ENCODE measurements at regions of chr3 and their contacts with region 1.

Region 1: DNA sequence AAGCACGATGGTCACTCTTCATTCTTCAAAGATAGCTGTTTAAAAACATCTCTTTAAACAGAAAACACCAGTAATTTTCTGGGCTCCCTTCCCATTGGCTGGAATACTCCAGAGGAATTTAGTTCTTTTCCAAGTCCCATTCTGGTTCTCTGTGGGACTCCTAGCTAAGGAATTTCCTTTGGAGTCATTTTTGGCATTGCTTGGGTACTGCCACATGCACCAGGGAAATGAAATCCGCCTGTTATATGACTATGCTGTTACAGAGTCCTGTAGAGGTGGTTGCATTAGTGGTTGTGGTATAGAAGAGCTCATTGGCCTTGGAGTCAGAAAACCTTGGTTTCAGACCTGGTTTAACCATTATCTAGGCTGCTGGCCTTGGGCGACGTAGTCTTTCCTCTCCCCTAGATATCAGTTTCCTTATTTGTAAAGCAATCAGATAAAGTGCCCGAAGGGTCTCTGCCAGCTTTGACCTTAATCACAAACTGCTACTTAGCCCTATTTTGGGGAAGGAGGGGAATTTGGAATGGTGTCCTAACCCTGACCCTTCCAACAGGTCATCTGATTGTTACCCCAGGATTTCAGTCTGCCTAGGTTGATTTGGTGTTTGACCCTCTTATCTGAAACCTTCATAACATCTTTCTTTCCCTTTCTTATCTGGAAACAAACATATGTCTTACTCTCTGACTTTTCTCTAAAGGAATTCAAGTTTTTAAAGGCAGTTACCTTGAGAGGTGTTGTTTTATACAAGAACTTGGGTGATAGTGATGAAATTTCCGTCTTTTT is 13.4 kb downstream of the RTP1 start:
- DNase-seq: no peak
- CTCF ChIP-seq: no peak

Region 2: DNA sequence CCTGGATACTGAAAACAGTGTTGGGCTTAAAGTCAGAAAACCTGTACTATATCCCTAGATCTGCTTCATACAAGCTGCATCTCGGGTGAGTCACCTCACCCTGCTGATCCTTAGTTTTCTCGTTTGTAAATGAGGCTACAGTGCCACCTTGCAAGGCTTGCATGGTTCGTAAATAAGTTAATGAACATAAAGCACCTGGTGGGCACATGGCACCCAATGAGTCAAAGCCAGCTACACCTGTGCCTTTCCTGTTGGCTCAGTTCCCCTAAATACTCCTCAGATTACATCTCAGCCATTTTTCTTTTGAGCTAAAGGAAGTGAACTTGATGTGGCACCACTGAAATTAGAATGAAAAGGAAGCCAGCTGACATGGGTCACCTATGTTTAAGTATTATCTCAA is 13.1 kb after region 1 on chr3:
- CTCF ChIA-PET with region 1: interaction called, 40 read pairs
- POLR2A ChIA-PET with region 1: interaction called, 4 read pairs
- DNase-seq: no peak
- CTCF ChIP-seq: no peak

Measured in GM10248 (cell line).